Mammary epithelial cell (primary cell): ENCODE measurements at regions of chr1 and their contacts with region 1.

Region 1: DNA sequence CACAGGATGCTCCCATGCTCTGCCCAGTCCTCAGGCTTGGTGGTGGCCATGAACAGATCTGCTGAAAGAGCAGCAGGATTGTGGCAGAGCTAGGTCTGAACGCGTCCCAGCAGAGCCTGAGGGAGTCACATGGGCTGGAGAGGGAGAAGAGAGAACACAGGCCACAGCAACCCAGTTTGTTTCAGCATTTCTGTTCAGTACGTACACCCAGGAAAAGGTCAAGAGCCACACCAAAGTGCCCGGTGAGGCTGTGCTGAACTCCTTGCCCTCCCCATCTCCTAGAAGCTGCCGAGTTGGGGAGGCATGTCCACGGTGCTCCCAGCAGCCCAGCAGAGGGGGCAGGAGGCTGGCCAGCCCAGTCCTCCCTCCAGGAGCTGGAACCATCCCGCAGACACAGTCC is 5.5 kb downstream of the PKP1 start:
- DNase-seq: peak; percentile 67
- H3K4me3 ChIP-seq: peak overlapping the region in 1 of 3 experiments; percentile 21
- H3K27ac ChIP-seq: peak overlapping the region; percentile 77
- H3K4me1 ChIP-seq: peaks cover 72% of the 10 kb centered on the region
- H3K27me3 ChIP-seq: no peaks in the 10 kb centered on the region
- CTCF ChIP-seq: peak in 1 of 2 donors; percentile 50

Region 2: DNA sequence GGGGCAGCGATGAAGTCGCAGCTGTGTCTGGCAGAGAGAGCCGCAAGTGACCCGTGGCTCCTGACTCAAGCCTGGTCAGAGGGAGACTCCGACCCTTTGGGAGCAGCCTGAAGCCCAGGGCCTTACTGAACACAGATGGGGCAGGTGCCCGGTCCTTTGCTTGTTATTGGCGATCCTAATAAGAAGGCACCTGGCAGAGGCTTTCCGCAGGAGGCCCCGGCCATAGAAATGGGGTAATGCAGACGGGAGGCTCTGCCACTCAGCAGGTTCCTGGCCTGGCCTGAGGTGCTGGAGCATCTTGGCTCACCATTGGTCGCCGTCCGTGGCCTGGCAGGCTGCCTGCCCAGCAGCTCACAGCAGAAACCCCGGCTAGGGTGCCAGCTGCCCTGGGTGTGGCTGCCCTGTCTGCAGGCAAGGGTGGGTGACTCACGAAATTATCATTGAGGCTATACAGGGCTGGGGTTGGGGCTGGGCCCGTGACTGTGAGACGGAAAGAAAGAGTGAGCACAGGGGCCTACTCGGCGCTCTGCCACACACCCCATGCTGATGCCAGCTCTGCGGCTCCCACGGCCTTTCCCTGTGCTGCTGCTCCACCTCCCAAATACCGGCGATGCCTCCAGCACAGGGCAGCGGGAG is 13.6 kb before region 1 on chr1:
- CTCF ChIA-PET with region 1: no interaction called
- dilution Hi-C with region 1: no loop called
- in situ Hi-C with region 1: no loop called
- intact Hi-C with region 1: loop called (anchors 2 kb)
- DNase-seq: peak; percentile 100
- H3K4me3 ChIP-seq: no peak overlapping the region
- H3K27ac ChIP-seq: peak overlapping the region; percentile 73
- H3K4me1 ChIP-seq: peaks cover 37% of the 10 kb centered on the region
- H3K27me3 ChIP-seq: no peaks in the 10 kb centered on the region
- CTCF ChIP-seq: no peak

Region 3: GRCh38 chr1:201299968-201300367 is 11.2 kb after region 1 on chr1:
- CTCF ChIA-PET with region 1: no interaction called
- dilution Hi-C with region 1: no loop called
- in situ Hi-C with region 1: no loop called
- intact Hi-C with region 1: loop called (anchors 1 kb)
- DNase-seq: peak; percentile 98
- H3K4me3 ChIP-seq: no peak overlapping the region
- H3K27ac ChIP-seq: peak overlapping the region; percentile 87
- H3K4me1 ChIP-seq: peaks cover 81% of the 10 kb centered on the region
- H3K27me3 ChIP-seq: no peaks in the 10 kb centered on the region
- CTCF ChIP-seq: no peak

Region 4: GRCh38 chr1:201309426-201309825 is 20.7 kb after region 1 on chr1:
- CTCF ChIA-PET with region 1: interaction called, 3 read pairs
- dilution Hi-C with region 1: no loop called
- in situ Hi-C with region 1: no loop called
- intact Hi-C with region 1: loop called (anchors 1 kb)
- DNase-seq: peak; percentile 94
- H3K4me3 ChIP-seq: no peak overlapping the region
- H3K27ac ChIP-seq: peak overlapping the region; percentile 98
- H3K4me1 ChIP-seq: peaks cover 64% of the 10 kb centered on the region
- H3K27me3 ChIP-seq: no peaks in the 10 kb centered on the region
- CTCF ChIP-seq: peak in 1 of 2 donors; percentile 30

Region 5: GRCh38 chr1:201353150-201353801 is 64.5 kb after region 1 on chr1:
- CTCF ChIA-PET with region 1: no interaction called
- dilution Hi-C with region 1: no loop called
- in situ Hi-C with region 1: no loop called
- intact Hi-C with region 1: no loop called
- DNase-seq: no peak
- H3K4me3 ChIP-seq: no peak overlapping the region
- H3K27ac ChIP-seq: no peak overlapping the region
- H3K4me1 ChIP-seq: peaks cover 17% of the 10 kb centered on the region
- H3K27me3 ChIP-seq: no peaks in the 10 kb centered on the region
- CTCF ChIP-seq: no peak